Activated CD8-positive, alpha-beta T cell treated with anti-CD3 and anti-CD28 coated beads, Interleukin-2, amount 10 ng/mL, durations not matched to agents 7 days and 5 days (primary cell): ENCODE measurements at regions of chr6 and their contacts with region 1.

Region 1: GRCh38 chr6:142474531-142475289 is 172.9 kb downstream of the ADGRG6 start:
- DNase-seq: no peak
- ATAC-seq: no peak
- H3K4me3 Mint-ChIP-seq: no peak overlapping the region
- H3K27ac Mint-ChIP-seq: no peak overlapping the region
- H3K4me1 Mint-ChIP-seq: peaks cover 14% of the 10 kb centered on the region
- H3K27me3 Mint-ChIP-seq: peaks cover 3% of the 10 kb centered on the region

Region 2: DNA sequence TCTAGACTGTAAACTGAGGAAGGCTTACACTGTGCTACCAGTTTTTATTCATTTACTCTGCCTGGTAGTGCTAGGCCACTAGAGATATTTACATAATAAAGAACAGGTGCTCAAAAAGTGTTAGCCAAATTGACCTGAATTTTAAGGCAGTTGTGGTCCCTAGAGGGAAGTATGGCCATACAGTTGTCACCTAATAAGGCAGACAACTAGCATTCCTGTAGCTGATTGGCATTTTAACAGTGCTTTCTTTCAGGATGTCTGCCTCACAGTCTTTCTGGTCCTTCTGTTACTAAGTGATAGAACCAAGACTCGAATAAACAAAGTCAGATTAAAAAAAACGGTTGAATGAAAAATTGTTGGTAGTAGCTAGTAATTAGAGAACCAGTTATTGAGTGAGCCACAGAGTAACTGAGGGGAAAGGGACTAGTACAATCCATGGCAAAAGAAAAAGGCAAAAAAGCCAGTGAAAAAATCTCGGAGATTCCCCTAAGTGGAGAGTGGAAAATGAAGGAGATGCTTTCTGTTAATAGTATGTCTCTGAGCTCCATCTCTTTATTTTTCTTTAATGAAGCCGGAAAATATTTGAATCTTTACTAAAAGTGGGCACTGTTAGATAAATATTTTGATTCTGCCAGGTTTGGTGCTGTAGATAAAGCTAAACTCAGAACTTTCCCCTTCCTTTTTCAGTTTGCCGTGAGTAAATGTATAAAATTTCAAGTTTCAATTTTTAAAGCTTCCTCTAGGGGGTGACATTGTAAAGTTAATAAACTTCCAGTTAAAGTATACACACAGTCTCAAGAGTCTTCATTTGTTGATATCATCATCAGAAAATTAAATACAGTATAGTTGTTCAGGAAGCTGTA is 318.6 kb before region 1 on chr6:
- CTCF ChIA-PET with region 1: interaction called, 14 read pairs
- POLR2A ChIA-PET with region 1: no interaction called
- DNase-seq: no peak
- ATAC-seq: peak; percentile 63
- H3K4me3 Mint-ChIP-seq: no peak overlapping the region
- H3K27ac Mint-ChIP-seq: no peak overlapping the region
- H3K4me1 Mint-ChIP-seq: peaks cover 20% of the 10 kb centered on the region
- H3K27me3 Mint-ChIP-seq: no peaks in the 10 kb centered on the region

Region 3: GRCh38 chr6:142551274-142551811 is 76.6 kb after region 1 on chr6:
- CTCF ChIA-PET with region 1: interaction called, 17 read pairs
- POLR2A ChIA-PET with region 1: no interaction called
- DNase-seq: peak; percentile 74
- ATAC-seq: peak; percentile 96
- H3K4me3 Mint-ChIP-seq: peak overlapping the region; percentile 23
- H3K27ac Mint-ChIP-seq: peak overlapping the region; percentile 76
- H3K4me1 Mint-ChIP-seq: peaks cover 34% of the 10 kb centered on the region
- H3K27me3 Mint-ChIP-seq: no peaks in the 10 kb centered on the region

Region 4: GRCh38 chr6:142566628-142567396 is 92.1 kb after region 1 on chr6:
- CTCF ChIA-PET with region 1: interaction called, 11 read pairs
- POLR2A ChIA-PET with region 1: no interaction called
- DNase-seq: peak; percentile 63
- ATAC-seq: peak; percentile 55
- H3K4me3 Mint-ChIP-seq: no peak overlapping the region
- H3K27ac Mint-ChIP-seq: no peak overlapping the region
- H3K4me1 Mint-ChIP-seq: peaks cover 37% of the 10 kb centered on the region
- H3K27me3 Mint-ChIP-seq: no peaks in the 10 kb centered on the region

Region 5: DNA sequence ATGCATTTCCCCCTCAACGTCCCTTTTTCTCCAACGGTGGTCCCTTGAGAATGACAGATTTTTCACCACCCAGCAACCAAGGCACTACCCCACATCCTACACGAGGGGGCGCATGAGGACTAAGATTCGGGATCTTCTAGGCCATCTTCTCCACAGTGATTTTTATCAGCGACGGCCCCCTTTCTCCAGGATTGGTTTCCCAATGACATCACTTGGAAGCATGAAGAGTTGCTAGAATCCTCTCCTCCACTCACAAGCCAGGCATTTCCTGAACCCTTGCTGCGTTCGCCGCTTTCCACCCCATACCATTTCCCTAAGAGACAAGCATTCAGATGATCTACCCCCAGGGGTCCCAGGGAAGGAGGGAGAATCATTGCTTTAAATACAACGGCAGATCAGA is 218.2 kb after region 1 on chr6:
- CTCF ChIA-PET with region 1: interaction called, 15 read pairs
- POLR2A ChIA-PET with region 1: no interaction called
- DNase-seq: peak; percentile 74
- ATAC-seq: peak; percentile 82
- H3K4me3 Mint-ChIP-seq: no peak overlapping the region
- H3K27ac Mint-ChIP-seq: no peak overlapping the region
- H3K4me1 Mint-ChIP-seq: peaks cover 12% of the 10 kb centered on the region
- H3K27me3 Mint-ChIP-seq: no peaks in the 10 kb centered on the region

Region 6: GRCh38 chr6:143026696-143027449 is 552.2 kb after region 1 on chr6:
- CTCF ChIA-PET with region 1: interaction called, 11 read pairs
- POLR2A ChIA-PET with region 1: no interaction called
- DNase-seq: peak; percentile 54
- ATAC-seq: peak; percentile 64
- H3K4me3 Mint-ChIP-seq: no peak overlapping the region
- H3K27ac Mint-ChIP-seq: no peak overlapping the region
- H3K4me1 Mint-ChIP-seq: no peaks in the 10 kb centered on the region
- H3K27me3 Mint-ChIP-seq: no peaks in the 10 kb centered on the region